ENCODE measurements at regions of chr15 and their contacts with region 1.

Region 1: GRCh38 chr15:40754883-40755811 is at the start of gene RMDN3:
- DNase-seq: peak; percentile 86 to 97 (median 92)
- ATAC-seq: peak; percentile 95
- H3K4me3 ChIP-seq: peak within 1 kb of the TSS; percentile 95
- H3K4me3 Mint-ChIP-seq: peak within 1 kb of the TSS; percentile 98
- H3K27ac ChIP-seq: peak within 1 kb of the TSS; percentile 65 to 78
- H3K27ac Mint-ChIP-seq: peak within 1 kb of the TSS; percentile 98
- H3K4me1 ChIP-seq: peaks cover 30% of the 10 kb centered on the region
- H3K4me1 Mint-ChIP-seq: peaks cover 30% of the 10 kb centered on the region
- H3K27me3 ChIP-seq: no peaks in the 10 kb centered on the region
- H3K27me3 Mint-ChIP-seq: no peaks in the 10 kb centered on the region
- CTCF ChIP-seq: no peak
- total RNA-seq, gene RMDN3: 29.1 to 30.3 TPM

Region 2: GRCh38 chr15:40564591-40565332 is 190.4 kb before region 1 on chr15 and contains the start of gene CCDC32:
- CTCF ChIA-PET with region 1: no interaction called
- POLR2A ChIA-PET with region 1: no interaction called
- intact Hi-C with region 1: loop called (anchors 2 kb)
- DNase-seq: peak; percentile 84 to 99 (median 92)
- ATAC-seq: peak; percentile 93
- H3K4me3 ChIP-seq: peak within 1 kb of the TSS; percentile 76
- H3K4me3 Mint-ChIP-seq: peak within 1 kb of the TSS; percentile 97
- H3K27ac ChIP-seq: peak within 1 kb of the TSS; percentile 85 to 89
- H3K27ac Mint-ChIP-seq: peak within 1 kb of the TSS; percentile 88
- H3K4me1 ChIP-seq: peaks cover 34% of the 10 kb centered on the region
- H3K4me1 Mint-ChIP-seq: peaks cover 43% of the 10 kb centered on the region
- H3K27me3 ChIP-seq: no peaks in the 10 kb centered on the region
- H3K27me3 Mint-ChIP-seq: no peaks in the 10 kb centered on the region
- CTCF ChIP-seq: no peak
- total RNA-seq, gene CCDC32: 20.9 to 21.3 TPM

Region 3: GRCh38 chr15:40807028-40807887 is 52.1 kb after region 1 on chr15 and contains the starts of genes DNAJC17 and ZFYVE19:
- CTCF ChIA-PET with region 1: no interaction called
- POLR2A ChIA-PET with region 1: interaction called, 3 read pairs
- intact Hi-C with region 1: loop called (anchors 1 to 2 kb)
- DNase-seq: peak; percentile 86 to 97 (median 92)
- ATAC-seq: peak; percentile 97
- H3K4me3 ChIP-seq: peak within 1 kb of the TSS; percentile 80
- H3K4me3 Mint-ChIP-seq: peak within 1 kb of the TSS; percentile 96
- H3K27ac ChIP-seq: peak within 1 kb of the TSS; percentile 90 to 93
- H3K27ac Mint-ChIP-seq: peak within 1 kb of the TSS; percentile 91
- H3K4me1 ChIP-seq: peaks cover 30% of the 10 kb centered on the region
- H3K4me1 Mint-ChIP-seq: peaks cover 23% of the 10 kb centered on the region
- H3K27me3 ChIP-seq: no peaks in the 10 kb centered on the region
- H3K27me3 Mint-ChIP-seq: no peaks in the 10 kb centered on the region
- CTCF ChIP-seq: no peak
- total RNA-seq, gene DNAJC17: 14.4 to 17.9 TPM
- total RNA-seq, gene ZFYVE19: 12.0 to 13.0 TPM

Region 4: GRCh38 chr15:41283653-41284426 is 528.7 kb after region 1 on chr15:
- CTCF ChIA-PET with region 1: no interaction called
- POLR2A ChIA-PET with region 1: no interaction called
- intact Hi-C with region 1: loop called in 1 of 2 experiments (anchors 10 kb)
- DNase-seq: peak; percentile 94 to 99 (median 97)
- ATAC-seq: peak; percentile 96
- H3K4me3 ChIP-seq: peak overlapping the region; percentile 80
- H3K4me3 Mint-ChIP-seq: peak overlapping the region; percentile 91
- H3K27ac ChIP-seq: peak overlapping the region; percentile 83 to 86
- H3K27ac Mint-ChIP-seq: peak overlapping the region; percentile 91
- H3K4me1 ChIP-seq: peaks cover 29% of the 10 kb centered on the region
- H3K4me1 Mint-ChIP-seq: peaks cover 50% of the 10 kb centered on the region
- H3K27me3 ChIP-seq: no peaks in the 10 kb centered on the region
- H3K27me3 Mint-ChIP-seq: no peaks in the 10 kb centered on the region
- CTCF ChIP-seq: no peak